Psoas muscle (tissue), 8 donors: ENCODE measurements at regions of chr17 and their contacts with region 1.

Region 1: DNA sequence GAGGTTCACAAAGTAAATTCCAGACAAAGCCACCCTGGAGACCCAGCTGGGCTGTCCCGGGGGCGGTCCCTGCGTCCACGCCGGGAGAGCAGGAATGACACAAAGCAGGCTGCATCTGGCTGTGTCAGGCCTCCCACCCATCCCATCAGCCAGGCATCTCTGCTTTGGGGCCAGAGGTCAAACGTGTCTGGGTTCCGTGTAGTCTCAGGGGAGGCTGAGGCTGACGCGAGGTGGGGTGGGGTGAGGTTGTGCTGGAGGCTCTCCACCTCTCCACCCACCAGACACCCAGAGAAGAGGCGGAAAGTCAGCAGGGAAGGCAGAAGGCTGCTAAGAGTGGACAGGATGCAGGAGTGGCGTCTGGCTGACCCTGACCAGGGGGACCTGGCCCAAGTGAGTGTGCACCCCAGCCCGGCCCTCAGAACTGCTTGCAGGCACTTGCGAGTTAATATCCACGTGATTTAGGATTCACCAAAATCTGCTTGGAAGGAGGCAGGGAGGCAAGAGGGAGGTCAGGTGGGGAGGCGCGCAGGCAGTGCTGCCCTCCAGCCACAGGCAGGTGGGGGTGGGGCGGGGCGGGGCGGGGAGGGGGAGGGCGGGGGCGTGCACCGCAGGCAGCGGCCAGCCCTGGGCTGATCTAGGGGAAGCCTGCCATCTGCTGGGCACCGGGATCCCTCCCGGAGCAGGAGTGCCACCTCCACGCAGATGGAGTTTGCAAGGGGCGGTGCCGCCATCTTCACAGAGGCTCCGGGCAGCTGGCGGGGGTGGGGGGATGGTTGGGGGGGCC is 44.3 kb downstream of the TBC1D16 start:
- DNase-seq: peak; percentile 78 to 87
- ATAC-seq: peak; percentile 83 to 90 (median 88)
- H3K4me3 ChIP-seq: peak overlapping the region; percentile 28
- H3K27ac ChIP-seq: no peak overlapping the region
- H3K4me1 ChIP-seq: no peaks in the 10 kb centered on the region
- H3K27me3 ChIP-seq: peaks cover 0 to 56% (median 4%) of the 10 kb centered on the region in 3 donors
- CTCF ChIP-seq: peak; percentile 50

Region 2: GRCh38 chr17:79741751-79742588 is 249.4 kb before region 1 on chr17:
- intact Hi-C with region 1: loop called (anchors 2 to 5 kb)
- DNase-seq: peak; percentile 73 to 83
- ATAC-seq: peak; percentile 69 to 90 (median 75)
- H3K4me3 ChIP-seq: no peak overlapping the region
- H3K27ac ChIP-seq: no peak overlapping the region
- H3K4me1 ChIP-seq: no peaks in the 10 kb centered on the region
- H3K27me3 ChIP-seq: peaks cover 0 to 68% (median 13%) of the 10 kb centered on the region in 3 donors
- CTCF ChIP-seq: peak; percentile 87

Region 3: DNA sequence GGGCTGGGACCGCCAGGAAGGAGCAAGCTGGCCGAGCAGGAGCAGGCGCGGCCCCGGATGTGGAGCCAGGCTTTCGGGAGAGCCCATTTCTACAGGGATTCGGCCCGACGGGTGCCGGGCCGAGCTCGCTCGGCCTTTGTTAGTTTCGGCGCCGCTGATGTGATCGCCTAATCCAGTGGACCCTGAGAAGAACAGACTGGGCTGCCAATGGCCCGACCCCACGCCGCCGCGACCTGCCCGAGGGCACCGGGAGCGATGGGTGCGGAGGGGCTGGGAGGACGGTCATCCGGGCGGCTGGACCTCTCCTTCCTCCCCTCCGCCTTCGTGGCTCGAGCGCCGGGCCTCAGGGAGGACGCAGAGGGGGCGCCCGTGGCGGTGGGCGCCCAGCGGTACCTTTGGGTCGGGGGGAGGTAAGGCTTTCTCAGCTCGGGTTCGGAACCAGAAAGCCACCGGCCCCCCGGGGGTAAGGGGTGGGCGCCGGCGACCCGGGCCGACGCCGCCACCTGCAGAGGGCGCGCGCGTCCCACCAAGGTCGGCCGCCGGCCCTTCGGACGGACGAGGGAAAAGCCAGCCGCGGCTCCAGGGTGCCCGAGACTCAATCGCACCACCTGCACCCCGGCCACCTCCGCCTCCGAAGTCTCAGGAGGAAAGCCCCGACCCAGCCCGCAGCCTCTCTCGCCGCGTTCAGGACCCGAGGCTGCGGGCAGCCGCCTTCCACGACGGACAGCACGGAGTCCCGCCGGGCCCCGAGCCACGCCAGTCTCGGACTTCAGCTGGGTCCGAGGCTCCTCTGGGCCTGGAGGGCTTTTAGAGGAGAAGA is 201.6 kb before region 1 on chr17:
- intact Hi-C with region 1: loop called (anchors 2 to 5 kb)
- DNase-seq: peak; percentile 55 to 72
- ATAC-seq: peak; percentile 73 to 83 (median 80)
- H3K4me3 ChIP-seq: no peak overlapping the region
- H3K27ac ChIP-seq: no peak overlapping the region
- H3K4me1 ChIP-seq: peaks cover 9% of the 10 kb centered on the region
- H3K27me3 ChIP-seq: peaks cover 0 to 83% (median 38%) of the 10 kb centered on the region in 3 donors
- CTCF ChIP-seq: peak; percentile 68

Region 4: GRCh38 chr17:79808763-79809529 is 182.4 kb before region 1 on chr17:
- intact Hi-C with region 1: loop called in 1 of 2 experiments (anchors 5 kb)
- DNase-seq: no peak
- ATAC-seq: peak in 3 of 4 donors; percentile 46 to 62 (median 47)
- H3K4me3 ChIP-seq: no peak overlapping the region
- H3K27ac ChIP-seq: no peak overlapping the region
- H3K4me1 ChIP-seq: peaks cover 16% of the 10 kb centered on the region
- H3K27me3 ChIP-seq: peaks cover 0 to 89% (median 69%) of the 10 kb centered on the region in 3 donors
- CTCF ChIP-seq: no peak

Region 5: DNA sequence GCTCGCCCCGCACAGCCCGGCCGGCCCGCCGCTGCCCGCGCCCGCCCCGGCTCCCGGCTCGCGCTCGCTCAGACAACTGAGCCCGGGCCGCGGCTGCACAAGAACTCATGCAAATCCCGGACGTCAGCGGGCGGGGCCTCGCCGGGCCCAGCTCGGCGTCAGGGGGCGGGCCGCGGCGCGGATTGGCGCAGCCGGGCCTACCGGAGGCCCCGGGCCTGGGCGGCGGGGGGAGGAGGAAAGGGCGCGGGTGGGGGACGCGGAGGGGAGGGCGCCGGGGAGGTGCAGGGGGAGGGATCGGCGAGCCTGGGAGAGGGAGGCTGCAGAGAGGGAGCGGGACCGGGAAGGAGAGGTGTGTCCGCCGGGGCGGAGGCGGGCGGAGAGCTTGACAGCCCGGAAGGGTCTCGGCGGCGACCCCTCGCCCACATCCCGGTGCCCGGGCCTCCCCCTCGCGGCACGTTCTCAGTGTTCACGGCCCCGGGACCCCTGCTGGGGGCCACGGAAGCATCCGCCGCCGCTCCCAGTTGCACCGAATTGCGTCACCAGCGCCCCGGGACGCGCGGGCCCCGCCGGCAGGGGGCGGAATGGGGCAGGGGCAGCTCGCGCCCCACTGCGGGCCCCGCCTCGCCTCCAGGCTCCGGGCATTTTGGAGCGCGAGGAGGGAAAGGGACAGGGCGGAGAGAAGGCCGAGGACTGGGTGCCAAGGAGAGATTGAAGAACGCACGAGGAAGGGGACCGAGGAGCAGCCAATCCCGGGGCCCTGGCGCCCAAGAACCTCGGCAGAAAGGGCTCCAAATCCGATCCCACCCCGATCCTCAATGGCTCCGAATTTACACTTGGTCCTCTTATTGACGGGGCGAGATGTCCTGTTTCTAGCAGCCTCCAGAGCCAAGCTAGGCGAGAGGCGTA is 151.7 kb before region 1 on chr17 and contains the start of gene CBX4:
- intact Hi-C with region 1: loop called (anchors 5 to 10 kb)
- DNase-seq: peak; percentile 96
- ATAC-seq: peak; percentile 88 to 90 (median 89)
- H3K4me3 ChIP-seq: peak within 1 kb of the TSS; percentile 82
- H3K27ac ChIP-seq: peak within 1 kb of the TSS; percentile 82
- H3K4me1 ChIP-seq: peaks cover 48% of the 10 kb centered on the region
- H3K27me3 ChIP-seq: peaks cover 0 to 51% (median 30%) of the 10 kb centered on the region in 3 donors
- CTCF ChIP-seq: peak; percentile 80
- total RNA-seq, gene CBX4: 2.5 to 7.8 (median 4.6) TPM

Region 6: GRCh38 chr17:79970576-79971068 is 20.7 kb before region 1 on chr17:
- intact Hi-C with region 1: no loop called
- DNase-seq: no peak
- ATAC-seq: no peak
- H3K4me3 ChIP-seq: no peak overlapping the region
- H3K27ac ChIP-seq: no peak overlapping the region
- H3K4me1 ChIP-seq: no peaks in the 10 kb centered on the region
- H3K27me3 ChIP-seq: peaks cover 0 to 13% (median 0%) of the 10 kb centered on the region in 3 donors
- CTCF ChIP-seq: peak; percentile 33

Region 7: DNA sequence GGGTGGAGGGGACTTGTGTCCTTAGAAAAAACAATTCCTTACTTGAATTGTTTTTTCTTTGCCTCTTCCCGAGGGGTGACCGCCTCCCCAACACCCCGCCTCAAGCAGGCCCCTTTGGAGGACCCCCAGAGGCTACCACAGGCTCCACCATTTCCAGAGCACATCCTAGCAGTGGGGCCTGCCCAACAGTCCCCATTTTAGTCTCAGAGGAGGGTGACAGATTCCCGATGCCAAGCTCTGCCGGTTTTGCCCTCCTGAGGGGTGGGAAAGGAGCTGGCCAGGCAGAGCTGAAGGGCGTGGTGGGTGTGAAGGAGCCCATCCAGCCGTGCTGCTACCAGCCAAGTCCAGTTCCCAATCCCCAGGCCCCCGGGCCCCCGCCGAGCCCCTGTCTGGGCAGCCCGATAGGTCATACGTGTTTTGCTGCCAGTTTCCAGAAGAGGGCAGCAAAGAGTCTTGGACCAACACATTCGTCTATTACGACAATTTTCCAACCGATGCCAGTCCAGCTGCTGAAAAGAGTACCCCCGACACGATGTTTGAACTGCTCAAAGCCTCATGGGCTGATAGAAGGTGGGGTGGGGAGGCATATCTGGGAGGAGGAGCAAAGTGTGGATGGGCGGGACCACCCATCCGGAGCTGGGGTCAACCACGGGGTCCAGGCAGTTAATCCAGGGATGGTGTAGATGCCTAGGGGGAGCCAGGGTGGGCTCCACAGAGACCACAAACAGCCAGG is 91.2 kb after region 1 on chr17:
- intact Hi-C with region 1: no loop called
- DNase-seq: peak; percentile 45 to 63
- ATAC-seq: peak; percentile 43 to 87 (median 69)
- H3K4me3 ChIP-seq: peak overlapping the region; percentile 40
- H3K27ac ChIP-seq: no peak overlapping the region
- H3K4me1 ChIP-seq: no peaks in the 10 kb centered on the region
- H3K27me3 ChIP-seq: peaks cover 0 to 3% (median 0%) of the 10 kb centered on the region in 3 donors
- CTCF ChIP-seq: peak; percentile 70

Region 8: GRCh38 chr17:80388175-80388574 is 396.8 kb after region 1 on chr17:
- intact Hi-C with region 1: no loop called
- DNase-seq: no peak
- ATAC-seq: no peak
- H3K4me3 ChIP-seq: no peak overlapping the region
- H3K27ac ChIP-seq: no peak overlapping the region
- H3K4me1 ChIP-seq: no peaks in the 10 kb centered on the region
- H3K27me3 ChIP-seq: no peaks in the 10 kb centered on the region
- CTCF ChIP-seq: no peak